WTC11 (cell line): ENCODE measurements at regions of chr2 and their contacts with region 1.

Region 1: DNA sequence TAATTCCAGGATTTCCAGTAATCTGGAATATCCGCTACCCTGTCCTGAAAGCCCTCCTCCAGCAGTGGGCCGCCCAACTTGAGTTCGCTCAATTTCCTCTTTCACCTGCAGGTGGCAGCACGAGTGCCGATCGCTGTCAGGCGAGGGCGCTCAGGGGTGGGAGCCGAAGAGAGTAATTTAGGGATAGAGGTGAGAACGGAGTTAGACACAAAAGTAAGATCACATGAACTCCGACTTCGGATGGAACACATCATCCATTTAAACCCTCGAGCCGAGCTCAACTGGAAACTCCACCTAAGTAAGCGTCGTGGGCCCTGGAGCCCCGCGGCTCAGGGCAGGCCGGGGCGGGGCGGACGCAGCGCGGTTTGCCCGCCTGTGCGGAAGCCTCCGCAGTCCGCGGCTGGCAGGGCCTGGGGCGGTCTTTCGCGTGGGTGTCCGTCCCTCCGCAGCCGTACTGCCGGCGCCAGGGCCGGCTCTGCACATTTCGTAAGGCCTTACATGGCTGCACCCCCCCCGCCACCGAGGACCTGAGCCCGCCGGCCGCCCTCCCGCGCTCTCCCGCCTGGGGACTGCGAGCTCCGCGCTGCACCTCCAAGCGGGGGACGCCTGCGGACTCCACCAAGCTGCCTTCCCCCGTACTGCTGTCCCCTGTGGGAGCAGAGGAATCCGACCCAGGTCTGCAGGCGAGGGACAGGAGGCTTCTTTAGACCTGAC is 61.2 kb downstream of the SEMA4F start:
- DNase-seq: peak; percentile 90
- ATAC-seq: peak; percentile 93
- H3K4me3 Mint-ChIP-seq: peak overlapping the region; percentile 90
- H3K27ac Mint-ChIP-seq: no peak overlapping the region
- H3K4me1 Mint-ChIP-seq: peaks cover 6% of the 10 kb centered on the region; the same call in 1 of the 2 replicates
- H3K27me3 Mint-ChIP-seq: peaks cover 7% of the 10 kb centered on the region
- CTCF ChIP-seq: peak; percentile 85

Region 2: GRCh38 chr2:74250189-74250631 is 465.0 kb before region 1 on chr2:
- CTCF ChIA-PET with region 1: no interaction called
- POLR2A ChIA-PET with region 1: no interaction called
- DNase-seq: peak; percentile 52
- ATAC-seq: peak; percentile 85
- H3K4me3 Mint-ChIP-seq: no peak overlapping the region
- H3K27ac Mint-ChIP-seq: no peak overlapping the region
- H3K4me1 Mint-ChIP-seq: no peaks in the 10 kb centered on the region
- H3K27me3 Mint-ChIP-seq: peaks cover 7% of the 10 kb centered on the region; the same call in 1 of the 2 replicates
- CTCF ChIP-seq: peak; percentile 55

Region 3: DNA sequence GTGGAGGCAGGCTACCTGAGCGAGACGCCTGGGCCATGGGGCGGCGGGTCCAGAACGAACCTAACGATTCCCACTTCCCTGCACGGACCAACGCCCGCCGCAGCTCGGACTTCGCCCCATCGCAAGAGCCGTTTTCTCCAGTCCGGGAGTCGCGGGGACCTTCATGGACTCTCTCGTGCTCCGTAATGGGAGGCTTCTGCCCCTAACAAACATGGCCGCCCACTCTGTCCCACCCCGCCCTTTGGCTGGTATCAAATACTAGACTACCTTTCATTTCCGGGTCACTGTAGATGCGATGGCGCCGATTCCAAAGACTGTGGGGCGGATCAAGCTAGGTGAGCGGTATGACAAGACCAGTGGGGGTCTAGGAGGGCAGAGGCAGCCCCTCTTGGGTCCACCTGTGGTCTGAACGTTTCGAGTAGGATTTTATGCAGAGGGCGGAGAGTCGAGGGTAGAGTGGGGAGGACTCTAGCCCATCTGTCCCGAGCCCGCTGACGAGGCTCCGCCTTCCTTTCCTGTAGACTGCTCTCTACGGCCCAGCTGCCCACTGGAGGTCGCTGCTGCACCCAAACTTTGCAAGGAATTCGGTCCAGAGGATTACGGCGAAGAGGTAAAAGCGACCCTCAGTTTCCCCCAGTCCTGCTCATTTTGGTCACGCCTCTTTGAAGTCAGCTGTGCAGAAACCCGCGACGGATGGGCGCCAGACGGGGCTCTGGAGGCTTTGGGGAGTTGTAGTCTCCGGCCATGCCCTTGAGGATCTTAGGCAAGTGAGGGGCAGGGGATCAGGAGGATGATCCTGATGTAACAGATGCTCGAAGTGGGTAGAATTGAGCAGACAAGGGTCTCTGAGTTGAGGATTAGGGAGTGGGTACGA is 232.2 kb before region 1 on chr2 and contains the starts of genes CCDC142 and TTC31:
- CTCF ChIA-PET with region 1: no interaction called
- POLR2A ChIA-PET with region 1: no interaction called
- DNase-seq: peak; percentile 96
- ATAC-seq: peak; percentile 91
- H3K4me3 Mint-ChIP-seq: peak within 1 kb of the TSS; percentile 100
- H3K27ac Mint-ChIP-seq: peak within 1 kb of the TSS; percentile 100
- H3K4me1 Mint-ChIP-seq: peaks cover 10% of the 10 kb centered on the region
- H3K27me3 Mint-ChIP-seq: no peaks in the 10 kb centered on the region
- CTCF ChIP-seq: peak; percentile 68
- total RNA-seq, gene CCDC142: 10.0 to 14.0 TPM (median 10.4 TPM) in 3 replicates
- total RNA-seq, gene TTC31: 32.6 to 38.3 TPM (median 36.2 TPM) in 3 replicates

Region 4: GRCh38 chr2:74690571-74690970 is 24.7 kb before region 1 on chr2:
- CTCF ChIA-PET with region 1: interaction called, 16 read pairs
- POLR2A ChIA-PET with region 1: no interaction called
- DNase-seq: no peak
- ATAC-seq: peak; percentile 83
- H3K4me3 Mint-ChIP-seq: no peak overlapping the region
- H3K27ac Mint-ChIP-seq: no peak overlapping the region
- H3K4me1 Mint-ChIP-seq: no peaks in the 10 kb centered on the region
- H3K27me3 Mint-ChIP-seq: no peaks in the 10 kb centered on the region
- CTCF ChIP-seq: peak; percentile 35

Region 5: GRCh38 chr2:74740389-74741075 is 25.3 kb after region 1 on chr2:
- CTCF ChIA-PET with region 1: interaction called, 10 read pairs
- POLR2A ChIA-PET with region 1: no interaction called
- DNase-seq: no peak
- ATAC-seq: peak; percentile 38
- H3K4me3 Mint-ChIP-seq: no peak overlapping the region
- H3K27ac Mint-ChIP-seq: no peak overlapping the region
- H3K4me1 Mint-ChIP-seq: peaks cover 27% of the 10 kb centered on the region
- H3K27me3 Mint-ChIP-seq: no peaks in the 10 kb centered on the region; the same call in 1 of the 2 replicates
- CTCF ChIP-seq: no peak

Region 6: GRCh38 chr2:74778381-74779264 is 63.4 kb after region 1 on chr2:
- CTCF ChIA-PET with region 1: interaction called, 12 read pairs
- POLR2A ChIA-PET with region 1: no interaction called
- DNase-seq: peak; percentile 72
- ATAC-seq: peak; percentile 97
- H3K4me3 Mint-ChIP-seq: peak overlapping the region; percentile 48
- H3K27ac Mint-ChIP-seq: no peak overlapping the region; the same call in 1 of the 2 replicates
- H3K4me1 Mint-ChIP-seq: peaks cover 24% of the 10 kb centered on the region
- H3K27me3 Mint-ChIP-seq: peaks cover 7% of the 10 kb centered on the region; the same call in 1 of the 2 replicates
- CTCF ChIP-seq: no peak

Region 7: GRCh38 chr2:74833418-74834233 is 118.4 kb after region 1 on chr2 and contains the start of gene HK2:
- CTCF ChIA-PET with region 1: interaction called, 60 read pairs
- POLR2A ChIA-PET with region 1: interaction called, 8 read pairs
- DNase-seq: peak; percentile 82
- ATAC-seq: peak; percentile 63
- H3K4me3 Mint-ChIP-seq: peak within 1 kb of the TSS; percentile 86
- H3K27ac Mint-ChIP-seq: peak within 1 kb of the TSS; percentile 94
- H3K4me1 Mint-ChIP-seq: peaks cover 49% of the 10 kb centered on the region
- H3K27me3 Mint-ChIP-seq: no peaks in the 10 kb centered on the region
- CTCF ChIP-seq: no peak
- total RNA-seq, gene HK2: 61.6 to 74.5 TPM (median 73.9 TPM) in 3 replicates

Region 8: GRCh38 chr2:74849228-74849892 is 134.1 kb after region 1 on chr2:
- CTCF ChIA-PET with region 1: interaction called, 13 read pairs
- POLR2A ChIA-PET with region 1: no interaction called
- DNase-seq: no peak
- ATAC-seq: peak; percentile 74
- H3K4me3 Mint-ChIP-seq: peak overlapping the region; percentile 58
- H3K27ac Mint-ChIP-seq: peak overlapping the region; percentile 99
- H3K4me1 Mint-ChIP-seq: peaks cover 85% of the 10 kb centered on the region
- H3K27me3 Mint-ChIP-seq: no peaks in the 10 kb centered on the region
- CTCF ChIP-seq: no peak

Region 9: DNA sequence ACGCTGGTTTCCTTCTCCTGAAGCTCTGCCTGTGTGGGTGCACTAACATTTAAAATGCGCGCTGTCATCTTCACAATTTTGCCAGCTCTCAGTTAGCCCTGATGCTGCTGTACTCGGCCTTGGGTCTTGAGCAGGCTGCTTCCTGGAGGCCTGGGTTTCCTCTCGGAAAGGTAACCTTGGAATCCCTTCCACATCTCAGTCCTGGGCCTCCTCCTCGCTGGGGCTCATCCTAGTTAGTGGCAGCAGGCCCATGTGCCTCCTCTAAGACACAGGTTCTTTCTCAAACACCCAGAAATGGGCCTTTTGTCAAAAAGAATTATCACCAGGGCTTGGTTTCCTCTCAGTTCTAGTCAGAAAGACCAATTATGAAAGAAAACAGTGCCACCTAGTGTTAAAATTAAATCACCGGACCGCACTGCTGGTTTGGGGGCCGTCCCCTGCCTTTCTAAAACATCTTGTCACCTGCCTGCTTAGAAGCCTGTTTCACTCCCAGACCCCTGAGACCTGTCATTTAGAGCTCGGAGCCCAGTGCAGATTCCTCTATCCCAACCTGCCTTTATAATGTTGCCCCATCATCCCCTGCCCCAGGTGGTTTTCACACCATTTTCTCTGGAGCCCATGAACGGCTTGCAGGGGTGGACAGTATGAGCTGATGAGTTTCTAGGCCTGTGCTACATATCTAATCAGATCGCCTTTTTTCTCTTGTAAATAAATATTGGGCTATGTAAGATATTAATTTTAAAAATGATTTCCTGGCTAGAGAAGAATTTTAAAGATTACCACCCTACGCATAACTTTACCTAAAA is 161.0 kb after region 1 on chr2:
- CTCF ChIA-PET with region 1: interaction called, 22 read pairs
- POLR2A ChIA-PET with region 1: no interaction called
- DNase-seq: peak; percentile 28
- ATAC-seq: peak; percentile 76
- H3K4me3 Mint-ChIP-seq: no peak overlapping the region
- H3K27ac Mint-ChIP-seq: 0 out of 2 replicates have a peak overlapping the region, but pooled peaks have one; percentile 39
- H3K4me1 Mint-ChIP-seq: no peaks in the 10 kb centered on the region; the same call in 1 of the 2 replicates
- H3K27me3 Mint-ChIP-seq: no peaks in the 10 kb centered on the region
- CTCF ChIP-seq: no peak; the same call in none of the 2 replicates